Right ventricle myocardium superior (tissue), 1 donor: ENCODE measurements at regions of chr1 and their contacts with region 1.

Region 1: GRCh38 chr1:170664828-170665612 is 1.1 kb downstream of the PRRX1 start:
- DNase-seq: peak; percentile 66
- ATAC-seq: peak; percentile 70

Region 2: GRCh38 chr1:170531758-170532657 is 133.0 kb before region 1 on chr1 and contains the start of gene GORAB:
- intact Hi-C with region 1: loop called (anchors 10 kb)
- DNase-seq: peak; percentile 95
- ATAC-seq: peak; percentile 99
- total RNA-seq, gene GORAB: 6.6 TPM

Region 3: GRCh38 chr1:170881268-170882265 is 216.5 kb after region 1 on chr1:
- intact Hi-C with region 1: loop called (anchors 10 kb)
- DNase-seq: no peak
- ATAC-seq: peak; percentile 81